ENCODE measurements at regions of chrX and their contacts with region 1.

Region 1: GRCh38 chrX:79107891-79108718 is 36.4 kb upstream of the GPR174 start:
- DNase-seq: no peak
- ATAC-seq: peak; percentile 88
- H3K4me3 Mint-ChIP-seq: peak overlapping the region; percentile 52
- H3K27ac Mint-ChIP-seq: peak overlapping the region; percentile 95
- H3K4me1 Mint-ChIP-seq: peaks cover 42% of the 10 kb centered on the region
- H3K27me3 Mint-ChIP-seq: no peaks in the 10 kb centered on the region
- CTCF ChIP-seq: no peak

Region 2: DNA sequence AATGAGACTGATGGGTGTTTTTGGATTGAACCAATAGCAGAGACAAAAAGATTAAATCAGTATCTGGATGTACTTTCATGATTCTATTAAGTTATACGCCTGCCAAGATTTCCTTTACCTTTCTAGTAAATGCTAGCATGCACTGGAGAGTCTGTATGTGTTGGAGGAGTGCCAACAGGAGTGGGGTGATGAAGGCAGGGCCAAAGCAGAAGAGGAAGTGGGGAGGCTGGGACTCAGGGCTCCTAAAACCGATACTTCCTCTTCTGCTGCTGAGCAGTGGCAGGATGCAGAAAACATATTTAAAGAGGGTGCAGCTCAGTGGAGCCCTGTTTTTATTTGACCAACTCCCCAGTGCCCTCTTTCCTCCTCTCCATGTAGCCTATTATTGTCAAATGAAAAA is 786.3 kb before region 1 on chrX:
- CTCF ChIA-PET with region 1: no interaction called
- POLR2A ChIA-PET with region 1: interaction called, 3 read pairs
- intact Hi-C with region 1: loop called (anchors 10 kb)
- DNase-seq: peak; percentile 24
- ATAC-seq: peak; percentile 93
- H3K4me3 Mint-ChIP-seq: peak overlapping the region; percentile 41
- H3K27ac Mint-ChIP-seq: peak overlapping the region; percentile 77
- H3K4me1 Mint-ChIP-seq: peaks cover 61% of the 10 kb centered on the region
- H3K27me3 Mint-ChIP-seq: no peaks in the 10 kb centered on the region
- CTCF ChIP-seq: no peak

Region 3: GRCh38 chrX:79138658-79139241 is 30.6 kb after region 1 on chrX:
- CTCF ChIA-PET with region 1: interaction called, 3 read pairs
- POLR2A ChIA-PET with region 1: interaction called, 11 read pairs
- intact Hi-C with region 1: loop called (anchors 1 kb)
- DNase-seq: no peak
- ATAC-seq: peak; percentile 89
- H3K4me3 Mint-ChIP-seq: peak overlapping the region; percentile 55
- H3K27ac Mint-ChIP-seq: peak overlapping the region; percentile 91
- H3K4me1 Mint-ChIP-seq: peaks cover 57% of the 10 kb centered on the region
- H3K27me3 Mint-ChIP-seq: no peaks in the 10 kb centered on the region
- CTCF ChIP-seq: no peak

Region 4: DNA sequence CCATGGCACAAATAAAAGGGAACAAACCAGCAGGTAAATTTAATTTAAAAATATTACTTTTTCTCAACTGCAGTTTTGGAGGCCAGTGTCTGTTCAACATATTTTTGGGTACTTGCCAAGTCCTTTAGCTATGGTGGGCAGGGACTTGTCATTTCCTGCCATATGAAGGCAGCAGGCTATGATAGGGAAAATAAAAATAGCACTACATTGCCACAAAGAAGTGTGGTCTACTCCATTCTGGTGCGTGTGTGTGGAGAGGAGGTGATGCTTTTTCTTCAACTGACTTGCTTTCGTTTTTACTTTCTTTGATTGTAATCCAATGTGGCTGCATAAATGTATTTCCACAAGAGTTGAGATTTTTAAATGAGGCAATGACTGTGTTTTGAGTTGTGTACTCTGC is 53.5 kb after region 1 on chrX:
- CTCF ChIA-PET with region 1: no interaction called
- POLR2A ChIA-PET with region 1: interaction called, 3 read pairs
- intact Hi-C with region 1: loop called (anchors 5 kb)
- DNase-seq: no peak
- ATAC-seq: peak; percentile 84
- H3K4me3 Mint-ChIP-seq: peak overlapping the region; percentile 79
- H3K27ac Mint-ChIP-seq: peak overlapping the region; percentile 92
- H3K4me1 Mint-ChIP-seq: peaks cover 70% of the 10 kb centered on the region
- H3K27me3 Mint-ChIP-seq: no peaks in the 10 kb centered on the region
- CTCF ChIP-seq: no peak

Region 5: DNA sequence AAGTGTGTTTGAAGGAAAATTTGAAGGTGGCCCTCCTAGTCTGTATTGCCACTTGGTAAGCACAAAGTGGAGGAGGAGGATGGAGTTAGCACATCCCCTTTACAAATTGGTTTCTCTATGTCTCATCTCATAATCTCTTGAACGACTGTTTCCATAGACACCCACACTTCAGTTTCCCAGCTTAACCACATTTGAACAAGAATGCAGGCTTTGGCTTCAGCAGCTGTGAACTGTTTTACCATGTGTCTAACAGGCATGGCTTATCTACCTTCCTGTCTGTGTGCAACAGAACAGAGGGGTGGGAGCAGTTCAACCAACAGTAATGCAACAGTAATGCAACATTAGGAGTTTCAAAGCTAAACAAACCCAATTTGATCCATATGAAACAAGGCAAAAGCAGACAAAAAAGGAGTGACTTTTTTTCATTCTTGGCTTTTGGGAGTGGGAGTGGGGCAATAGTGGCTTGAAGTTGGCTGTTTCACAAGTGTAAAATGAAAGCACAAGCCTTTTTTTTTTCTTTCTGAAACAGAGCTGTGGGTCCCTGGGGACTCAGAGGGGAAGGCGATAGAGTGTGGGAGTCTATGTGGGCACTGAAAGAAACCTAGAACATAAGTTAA is 151.1 kb after region 1 on chrX:
- CTCF ChIA-PET with region 1: no interaction called
- POLR2A ChIA-PET with region 1: interaction called, 3 read pairs
- intact Hi-C with region 1: loop called (anchors 2 kb)
- DNase-seq: no peak
- ATAC-seq: peak; percentile 83
- H3K4me3 Mint-ChIP-seq: peak overlapping the region; percentile 59
- H3K27ac Mint-ChIP-seq: peak overlapping the region; percentile 91
- H3K4me1 Mint-ChIP-seq: peaks cover 72% of the 10 kb centered on the region
- H3K27me3 Mint-ChIP-seq: no peaks in the 10 kb centered on the region
- CTCF ChIP-seq: no peak

Measured in activated B cell treated with CpG ODN at 0.5 μM for 24 hours (primary cell).